ENCODE measurements at regions of chr11 and their contacts with region 1.

Region 1: DNA sequence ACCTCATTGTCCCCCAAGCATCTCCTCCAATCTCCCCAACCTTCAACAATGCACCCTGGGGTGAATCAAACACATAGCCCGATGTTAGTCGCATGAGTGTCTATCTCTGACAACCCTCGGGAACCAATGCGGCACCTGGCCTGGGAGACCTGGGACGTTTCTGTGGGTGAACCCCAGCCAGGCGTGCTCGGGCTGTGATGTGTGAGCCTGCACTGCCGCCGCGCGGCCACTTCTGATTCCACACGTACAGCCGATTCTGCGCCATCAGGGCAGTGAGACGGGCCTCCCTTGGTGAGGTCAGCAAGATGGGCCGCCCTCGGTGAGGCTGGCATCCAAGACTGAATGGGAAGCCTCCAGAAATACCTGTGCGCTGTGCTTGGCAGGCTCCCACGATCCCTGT is 5.2 kb upstream of the H19 start:
- DNase-seq: no peak
- ATAC-seq: peak; percentile 63
- H3K4me3 Mint-ChIP-seq: no peak overlapping the region
- H3K27ac Mint-ChIP-seq: no peak overlapping the region
- H3K4me1 Mint-ChIP-seq: no peaks in the 10 kb centered on the region
- H3K27me3 Mint-ChIP-seq: no peaks in the 10 kb centered on the region

Region 2: DNA sequence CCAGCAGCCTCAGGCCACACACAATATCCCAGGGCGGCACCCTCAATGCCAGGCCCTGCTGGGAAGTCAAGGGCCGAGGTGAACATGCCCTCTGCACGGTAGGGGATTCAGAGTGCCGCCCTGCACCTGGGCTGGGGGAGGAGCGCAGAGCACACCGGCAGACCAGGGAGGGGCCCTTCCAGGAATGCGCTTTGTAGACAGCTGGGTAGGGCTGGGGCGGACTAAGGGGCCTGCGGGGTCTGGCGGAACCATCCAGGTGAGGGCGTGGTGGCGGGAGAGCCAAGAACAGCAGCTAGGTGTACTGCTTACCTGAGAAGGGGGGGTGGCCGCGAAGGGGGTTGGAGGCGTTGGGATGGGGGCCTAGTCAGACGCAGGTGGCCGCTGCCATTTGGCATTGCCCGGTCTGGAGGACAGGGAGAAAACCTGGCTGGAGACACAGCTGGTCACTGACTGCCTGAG is 456.7 kb before region 1 on chr11:
- CTCF ChIA-PET with region 1: no interaction called
- POLR2A ChIA-PET with region 1: no interaction called
- intact Hi-C with region 1: no loop called
- DNase-seq: no peak
- ATAC-seq: no peak
- H3K4me3 Mint-ChIP-seq: peak overlapping the region; percentile 17
- H3K27ac Mint-ChIP-seq: no peak overlapping the region
- H3K4me1 Mint-ChIP-seq: peaks cover 2% of the 10 kb centered on the region
- H3K27me3 Mint-ChIP-seq: peaks cover 23% of the 10 kb centered on the region

Region 3: DNA sequence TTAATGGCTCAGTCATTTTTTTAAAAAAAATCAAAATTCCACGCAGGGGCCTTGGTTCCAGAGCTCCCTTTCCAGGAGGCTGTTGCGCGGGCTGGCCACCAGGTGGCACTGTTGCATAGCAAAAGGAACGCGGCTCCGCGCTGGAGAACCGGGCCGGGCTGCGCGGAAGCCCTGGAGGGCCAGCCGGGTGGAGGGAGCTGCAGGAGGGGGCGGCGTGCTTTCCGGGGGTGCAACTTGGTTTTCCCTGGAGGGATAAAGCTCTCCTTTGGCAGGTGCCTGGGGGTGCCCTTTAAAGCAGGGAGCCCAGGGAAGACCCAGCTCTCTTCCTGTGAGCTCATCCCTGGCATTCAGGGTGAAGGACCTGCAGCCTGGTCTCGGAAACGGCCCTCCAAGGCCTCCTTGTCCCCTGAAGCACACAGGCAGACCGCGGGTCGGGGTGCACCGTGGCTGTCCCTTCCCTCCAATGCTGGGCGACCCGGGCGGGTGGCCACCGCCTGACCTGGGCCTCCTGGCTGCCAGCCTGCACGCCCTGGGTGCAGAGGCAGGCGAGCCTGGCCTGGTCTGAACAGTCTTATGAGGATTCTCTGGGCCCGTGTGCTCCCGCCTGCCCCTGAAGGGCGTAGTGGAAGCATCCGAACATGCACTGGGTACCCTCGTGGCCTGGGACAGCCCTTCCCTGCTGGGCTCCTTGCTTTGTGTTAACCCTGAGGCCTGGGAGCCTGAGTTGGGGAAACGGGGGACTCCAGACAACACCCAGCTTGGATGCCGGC is 349.9 kb before region 1 on chr11:
- CTCF ChIA-PET with region 1: interaction called, 17 read pairs
- POLR2A ChIA-PET with region 1: no interaction called
- intact Hi-C with region 1: no loop called
- DNase-seq: peak; percentile 86
- ATAC-seq: peak; percentile 91
- H3K4me3 Mint-ChIP-seq: no peak overlapping the region
- H3K27ac Mint-ChIP-seq: no peak overlapping the region
- H3K4me1 Mint-ChIP-seq: no peaks in the 10 kb centered on the region
- H3K27me3 Mint-ChIP-seq: peaks cover 3% of the 10 kb centered on the region

Region 4: DNA sequence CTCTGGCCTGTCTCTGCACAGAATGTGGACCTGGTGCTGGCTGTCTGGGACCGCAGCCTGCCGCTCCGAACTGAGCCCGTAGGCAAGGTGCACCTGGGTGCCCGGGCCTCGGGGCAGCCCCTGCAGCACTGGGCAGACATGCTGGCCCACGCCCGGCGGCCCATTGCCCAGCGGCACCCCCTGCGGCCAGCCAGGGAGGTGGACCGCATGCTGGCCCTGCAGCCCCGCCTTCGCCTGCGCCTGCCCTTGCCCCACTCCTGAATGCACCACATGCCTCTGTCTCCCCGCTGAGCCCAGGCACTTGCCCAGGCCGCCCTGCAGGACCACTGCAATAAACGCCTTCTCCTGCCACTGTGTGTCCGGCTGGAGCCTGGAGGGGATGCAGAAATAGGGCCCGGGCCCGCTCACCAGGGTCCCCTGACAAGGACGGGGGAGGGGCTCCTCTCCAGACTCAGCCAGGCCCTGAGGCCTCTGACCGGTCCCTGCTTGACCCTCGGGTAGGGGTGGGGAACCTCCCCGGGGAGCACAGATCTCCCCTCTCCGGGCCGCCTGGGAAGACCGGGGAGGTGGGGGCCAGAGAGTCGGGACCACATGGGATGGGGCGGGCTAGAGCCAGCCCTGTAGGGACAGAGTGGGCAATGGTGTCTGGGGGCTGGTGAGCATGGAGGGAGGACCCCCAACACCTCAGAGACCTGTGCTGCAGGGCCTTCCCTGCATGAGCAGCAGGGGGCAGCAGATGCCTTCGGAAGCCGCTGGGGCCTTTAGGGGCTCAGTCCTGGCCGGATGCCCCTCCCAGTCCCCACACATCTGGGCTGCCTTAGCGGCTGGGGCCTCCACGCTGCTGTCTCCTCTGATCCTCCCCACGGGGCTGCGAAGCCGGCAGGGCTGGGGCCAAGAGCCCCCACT is 165.4 kb before region 1 on chr11:
- CTCF ChIA-PET with region 1: interaction called, 28 read pairs
- POLR2A ChIA-PET with region 1: no interaction called
- intact Hi-C with region 1: no loop called
- DNase-seq: peak; percentile 89
- ATAC-seq: peak; percentile 91
- H3K4me3 Mint-ChIP-seq: no peak overlapping the region
- H3K27ac Mint-ChIP-seq: no peak overlapping the region
- H3K4me1 Mint-ChIP-seq: no peaks in the 10 kb centered on the region
- H3K27me3 Mint-ChIP-seq: no peaks in the 10 kb centered on the region

Region 5: DNA sequence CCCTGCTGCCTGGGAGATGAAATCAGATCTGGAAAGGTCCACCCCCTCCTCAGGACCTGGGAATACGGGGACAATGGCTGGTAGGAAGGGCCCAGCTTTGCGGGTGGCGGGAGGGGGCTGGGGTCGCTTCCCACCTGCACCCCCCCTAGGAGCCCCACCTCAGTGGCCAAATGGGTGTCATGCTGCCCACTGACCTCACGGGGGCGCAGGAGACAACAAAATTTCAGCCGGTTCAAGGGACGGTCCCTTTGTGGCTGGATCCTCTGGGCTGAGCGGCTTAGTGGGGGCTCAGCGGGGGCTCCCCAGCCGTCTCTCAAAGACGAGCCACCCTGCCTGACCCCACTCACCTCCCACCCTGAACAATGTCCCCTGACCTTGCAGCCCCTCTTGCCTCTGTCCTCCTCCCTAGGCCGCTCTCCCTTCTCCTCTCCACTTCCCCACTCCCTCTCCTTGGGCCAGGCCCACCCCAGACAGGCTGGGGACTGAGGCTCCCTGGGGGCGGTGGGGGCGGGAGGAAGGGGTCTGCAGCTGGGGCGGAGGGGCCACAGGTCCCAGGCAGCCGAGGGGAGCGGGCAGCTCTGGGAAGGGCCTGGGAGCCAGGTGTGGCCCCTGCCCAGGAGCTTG is 34.2 kb after region 1 on chr11:
- CTCF ChIA-PET with region 1: interaction called, 4 read pairs
- POLR2A ChIA-PET with region 1: interaction called, 10 read pairs
- intact Hi-C with region 1: no loop called
- DNase-seq: no peak
- ATAC-seq: peak; percentile 75
- H3K4me3 Mint-ChIP-seq: no peak overlapping the region
- H3K27ac Mint-ChIP-seq: no peak overlapping the region
- H3K4me1 Mint-ChIP-seq: no peaks in the 10 kb centered on the region
- H3K27me3 Mint-ChIP-seq: no peaks in the 10 kb centered on the region

Region 6: DNA sequence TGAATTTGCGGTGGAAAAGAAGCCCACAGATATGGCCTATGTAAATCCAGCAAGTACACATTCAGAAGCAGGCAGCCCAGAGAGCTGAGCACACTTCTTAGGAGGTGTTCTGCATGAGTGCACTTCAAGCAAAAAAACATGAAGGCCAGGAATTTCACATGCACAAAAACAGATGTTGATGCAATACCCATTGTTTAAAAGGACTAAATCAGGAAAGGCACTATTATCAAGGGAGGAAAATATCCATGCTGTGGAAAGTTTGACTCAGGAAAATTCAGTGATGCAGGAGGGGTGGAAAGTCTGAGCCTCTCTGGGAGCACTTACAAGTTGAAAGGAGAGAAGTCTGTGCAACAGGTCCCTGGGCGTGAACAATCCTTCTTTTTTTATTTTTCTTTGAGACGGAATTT is 1070.2 kb after region 1 on chr11:
- CTCF ChIA-PET with region 1: no interaction called
- POLR2A ChIA-PET with region 1: no interaction called
- intact Hi-C with region 1: no loop called
- DNase-seq: no peak
- ATAC-seq: no peak
- H3K4me3 Mint-ChIP-seq: no peak overlapping the region
- H3K27ac Mint-ChIP-seq: no peak overlapping the region
- H3K4me1 Mint-ChIP-seq: no peaks in the 10 kb centered on the region
- H3K27me3 Mint-ChIP-seq: peaks cover 5% of the 10 kb centered on the region